Naive thymus-derived CD4-positive, alpha-beta T cell (primary cell): ENCODE measurements at regions of chr17 and their contacts with region 1.

Region 1: GRCh38 chr17:15896834-15897233 is 48.1 kb upstream of the ADORA2B start:
- DNase-seq: no peak
- ATAC-seq: no peak
- H3K4me3 ChIP-seq: no peak overlapping the region
- H3K4me3 Mint-ChIP-seq: peak overlapping the region; percentile 39 to 89 (median 79)
- H3K27ac ChIP-seq: no peak overlapping the region
- H3K27ac Mint-ChIP-seq: peak overlapping the region; percentile 66 to 95 (median 83)
- H3K4me1 ChIP-seq: peaks cover 0 to 8% of the 10 kb centered on the region in 2 donors
- H3K4me1 Mint-ChIP-seq: peaks cover 11 to 28% (median 24%) of the 10 kb centered on the region in 7 donors
- H3K27me3 ChIP-seq: no peaks in the 10 kb centered on the region
- H3K27me3 Mint-ChIP-seq: peaks cover 0 to 10% (median 0%) of the 10 kb centered on the region in 5 donors

Region 2: GRCh38 chr17:15954222-15954621 is 57.4 kb after region 1 on chr17:
- CTCF ChIA-PET with region 1: no interaction called
- POLR2A ChIA-PET with region 1: no interaction called
- intact Hi-C with region 1: loop called in 1 of 2 experiments (anchors 2 kb)
- DNase-seq: no peak
- ATAC-seq: peak; percentile 19
- H3K4me3 ChIP-seq: no peak overlapping the region
- H3K4me3 Mint-ChIP-seq: no peak overlapping the region
- H3K27ac ChIP-seq: no peak overlapping the region
- H3K27ac Mint-ChIP-seq: peak overlapping the region in 1 of 9 donors; percentile 46
- H3K4me1 ChIP-seq: peaks cover 4 to 7% of the 10 kb centered on the region in 2 donors
- H3K4me1 Mint-ChIP-seq: peaks cover 0 to 30% (median 7%) of the 10 kb centered on the region in 7 donors
- H3K27me3 ChIP-seq: no peaks in the 10 kb centered on the region
- H3K27me3 Mint-ChIP-seq: peaks cover 0 to 50% (median 0%) of the 10 kb centered on the region in 5 donors

Region 3: GRCh38 chr17:16106161-16106891 is 209.5 kb after region 1 on chr17:
- CTCF ChIA-PET with region 1: no interaction called
- POLR2A ChIA-PET with region 1: no interaction called
- intact Hi-C with region 1: no loop called
- DNase-seq: no peak
- ATAC-seq: no peak
- H3K4me3 ChIP-seq: no peak overlapping the region
- H3K4me3 Mint-ChIP-seq: no peak overlapping the region
- H3K27ac ChIP-seq: no peak overlapping the region
- H3K27ac Mint-ChIP-seq: peak overlapping the region in 4 of 9 donors; percentile 5 to 72 (median 65)
- H3K4me1 ChIP-seq: no peaks in the 10 kb centered on the region
- H3K4me1 Mint-ChIP-seq: peaks cover 0 to 21% (median 4%) of the 10 kb centered on the region in 7 donors
- H3K27me3 ChIP-seq: no peaks in the 10 kb centered on the region
- H3K27me3 Mint-ChIP-seq: no peaks in the 10 kb centered on the region